Cardiac septum (tissue), 1 donor: ENCODE measurements at regions of chr15 and their contacts with region 1.

Region 1: DNA sequence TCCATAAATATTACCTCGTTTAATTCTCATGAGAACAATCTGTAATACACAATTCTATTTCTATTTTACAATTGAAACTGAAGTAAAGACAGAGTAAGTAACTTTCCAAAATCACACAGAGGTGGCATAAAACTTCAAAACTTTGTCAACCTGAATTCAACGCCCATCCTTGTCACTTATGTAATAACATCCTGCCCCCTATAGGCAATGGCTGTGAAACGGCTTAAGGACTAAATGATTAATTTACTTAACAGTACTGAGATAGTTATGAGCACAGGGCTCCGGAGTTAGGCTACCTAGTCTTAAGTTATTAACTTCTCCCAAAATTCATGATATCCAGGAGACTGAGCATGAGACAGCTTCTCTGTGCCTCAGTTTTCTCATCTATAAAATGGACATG is 293.1 kb upstream of the CHRM5 start:
- DNase-seq: no peak

Region 2: DNA sequence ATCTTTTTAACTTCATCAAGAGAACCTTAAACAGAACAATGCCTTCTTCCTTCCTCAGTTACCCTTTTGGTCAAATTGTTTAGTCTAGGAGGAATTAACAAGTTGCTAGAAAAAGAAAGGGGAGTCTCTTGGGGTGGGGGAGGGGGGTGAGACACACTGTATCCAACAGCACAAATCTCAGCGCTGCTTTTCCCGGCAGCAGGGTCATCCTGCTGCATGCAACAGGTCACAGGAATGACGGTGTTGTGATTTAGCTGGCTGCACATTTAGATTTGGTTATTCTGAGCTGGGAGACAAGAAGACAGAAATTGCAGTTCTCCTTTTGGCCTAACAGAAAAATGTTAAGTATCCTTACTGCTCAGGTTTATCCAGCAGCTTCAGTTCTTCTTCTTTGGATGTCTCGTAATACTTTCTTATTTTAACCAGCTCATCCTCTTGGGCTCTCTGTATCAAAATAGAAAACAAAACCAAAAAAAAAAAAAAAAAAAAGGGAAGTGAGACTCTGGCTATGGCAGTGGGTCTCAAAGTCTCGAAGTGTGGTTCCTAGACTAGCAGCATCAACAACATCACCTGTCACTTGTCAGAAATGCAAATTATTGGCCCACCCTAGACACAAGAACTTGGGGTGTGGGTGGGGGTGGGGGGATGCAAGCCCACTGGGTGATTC is 767.0 kb before region 1 on chr15:
- intact Hi-C with region 1: no loop called
- DNase-seq: no peak

Region 3: GRCh38 chr15:33292717-33293307 is 382.4 kb before region 1 on chr15:
- intact Hi-C with region 1: loop called (anchors 10 kb)
- DNase-seq: no peak